BJ (cell line): ENCODE measurements at regions of chr19 and their contacts with region 1.

Region 1: DNA sequence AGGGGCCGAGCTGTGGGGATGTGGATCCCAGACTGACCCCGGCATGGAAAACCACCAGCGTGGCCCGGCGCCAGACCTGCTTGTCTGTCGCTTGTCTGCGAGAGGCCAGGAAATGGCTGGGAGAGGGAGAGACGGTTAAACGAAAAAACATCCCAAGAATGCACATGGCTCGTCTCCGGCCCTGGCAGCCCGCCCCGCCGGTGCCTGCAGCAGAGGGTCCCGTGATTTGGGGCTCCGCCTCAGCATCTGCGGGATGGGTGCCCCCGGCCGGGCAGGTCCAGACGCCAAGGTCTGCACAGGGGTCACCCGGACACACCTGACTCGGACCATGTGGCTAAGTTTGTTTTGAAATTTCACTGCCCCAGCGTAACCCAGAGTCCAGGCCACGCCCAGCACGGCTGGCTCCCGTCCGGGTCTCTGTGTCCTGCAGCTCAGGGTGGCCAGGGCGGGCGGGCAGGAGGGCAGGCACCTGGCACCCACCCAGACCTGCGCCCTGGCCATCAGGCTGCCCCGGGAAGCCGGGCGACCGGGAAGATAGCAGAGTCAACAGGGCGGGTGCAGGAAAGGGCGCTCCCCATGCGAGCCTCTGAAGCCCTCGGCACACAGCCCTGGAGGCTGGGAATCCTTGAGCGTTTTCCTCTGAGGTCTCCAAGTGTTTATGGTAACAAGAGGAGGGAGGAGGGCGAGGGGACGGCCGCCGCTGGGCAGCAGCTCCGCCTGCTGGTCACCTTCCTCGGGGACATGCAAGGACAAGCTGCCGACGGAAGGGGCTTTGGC is 103.2 kb downstream of the GADD45B start:
- DNase-seq: peak; percentile 65
- H3K4me3 ChIP-seq: peak overlapping the region; percentile 40
- H3K27me3 ChIP-seq: no peaks in the 10 kb centered on the region
- CTCF ChIP-seq: peak; percentile 98

Region 2: DNA sequence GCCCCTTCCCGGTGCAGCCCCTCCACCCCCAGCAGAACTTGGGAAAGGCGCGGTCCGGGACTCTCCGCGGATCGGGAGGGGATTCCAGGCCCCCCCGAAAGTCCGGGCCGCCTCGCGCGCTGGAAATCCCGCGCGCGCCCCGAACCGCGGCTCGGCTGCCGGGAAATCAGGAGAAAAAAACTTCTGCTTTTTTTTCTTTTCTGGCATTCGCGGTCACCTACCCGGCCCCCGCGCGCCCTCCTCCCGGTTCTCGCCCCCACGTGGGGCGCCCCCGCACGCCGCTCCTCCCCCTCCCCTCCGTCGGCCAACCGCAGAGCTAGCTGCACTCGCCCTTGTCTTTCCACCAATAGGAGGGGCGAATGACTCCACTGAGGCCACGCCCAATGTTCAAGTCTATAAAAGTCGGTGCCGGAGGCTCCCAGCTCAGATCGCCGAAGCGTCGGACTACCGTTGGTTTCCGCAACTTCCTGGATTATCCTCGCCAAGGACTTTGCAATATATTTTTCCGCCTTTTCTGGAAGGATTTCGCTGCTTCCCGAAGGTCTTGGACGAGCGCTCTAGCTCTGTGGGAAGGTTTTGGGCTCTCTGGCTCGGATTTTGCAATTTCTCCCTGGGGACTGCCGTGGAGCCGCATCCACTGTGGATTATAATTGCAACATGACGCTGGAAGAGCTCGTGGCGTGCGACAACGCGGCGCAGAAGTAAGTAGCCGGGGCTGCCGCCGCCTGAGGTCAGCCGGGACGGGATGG is 103.2 kb before region 1 on chr19 and contains the start of gene GADD45B:
- CTCF ChIA-PET with region 1: interaction called, 65 read pairs
- POLR2A ChIA-PET with region 1: interaction called, 41 read pairs
- DNase-seq: peak; percentile 85
- H3K4me3 ChIP-seq: peak within 1 kb of the TSS; percentile 70
- H3K27me3 ChIP-seq: no peaks in the 10 kb centered on the region
- CTCF ChIP-seq: no peak
- polyA plus RNA-seq, gene GADD45B: 54.5 and 69.8 TPM in 2 replicates

Region 3: GRCh38 chr19:2543463-2544442 is 35.3 kb before region 1 on chr19:
- CTCF ChIA-PET with region 1: interaction called, 22 read pairs
- POLR2A ChIA-PET with region 1: no interaction called
- DNase-seq: peak; percentile 91
- H3K4me3 ChIP-seq: no peak overlapping the region
- H3K27me3 ChIP-seq: no peaks in the 10 kb centered on the region
- CTCF ChIP-seq: peak; percentile 52

Region 4: DNA sequence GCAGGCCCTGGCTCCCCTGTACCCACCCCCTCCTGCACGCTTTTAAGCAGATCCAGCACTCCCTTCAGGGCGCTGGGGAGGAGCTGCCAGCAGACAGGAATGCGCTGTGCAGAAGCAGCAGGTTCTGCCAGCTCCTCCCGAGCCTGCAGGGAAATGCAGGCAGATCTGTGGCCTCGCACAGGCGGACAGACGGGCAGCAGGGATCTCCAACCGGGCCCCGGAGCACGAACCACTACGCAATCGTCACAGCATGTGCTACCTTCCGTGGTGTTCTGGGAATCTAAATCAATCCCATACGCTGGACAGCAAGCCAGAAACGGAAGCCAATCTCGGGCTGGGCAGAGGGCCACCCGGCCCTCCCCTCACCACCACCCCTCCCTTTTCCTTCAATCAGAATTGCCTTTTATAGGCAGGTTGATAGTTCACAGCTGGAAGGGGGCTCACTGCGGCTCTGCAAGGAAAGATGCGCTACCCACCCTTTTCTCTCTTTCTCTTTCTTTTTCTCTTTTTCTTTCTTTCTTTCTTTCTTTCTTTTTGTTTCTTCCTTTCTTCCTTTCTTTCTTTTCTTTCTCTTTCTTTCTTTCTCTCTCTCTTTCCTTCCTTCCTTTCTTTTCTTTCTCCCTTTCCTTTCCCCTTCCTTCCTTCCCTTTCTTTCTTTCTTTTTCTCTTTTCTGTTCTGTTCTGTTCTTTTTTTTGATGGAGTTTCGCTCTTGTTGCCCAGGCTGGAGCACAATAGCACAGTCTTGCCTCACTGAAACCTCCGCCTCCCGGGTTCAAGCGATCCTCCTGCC is 23.5 kb after region 1 on chr19:
- CTCF ChIA-PET with region 1: interaction called, 32 read pairs
- POLR2A ChIA-PET with region 1: no interaction called
- DNase-seq: peak; percentile 97
- H3K4me3 ChIP-seq: peak overlapping the region; percentile 27
- H3K27me3 ChIP-seq: no peaks in the 10 kb centered on the region
- CTCF ChIP-seq: peak; percentile 27; the same call in 1 of the 2 replicates

Region 5: DNA sequence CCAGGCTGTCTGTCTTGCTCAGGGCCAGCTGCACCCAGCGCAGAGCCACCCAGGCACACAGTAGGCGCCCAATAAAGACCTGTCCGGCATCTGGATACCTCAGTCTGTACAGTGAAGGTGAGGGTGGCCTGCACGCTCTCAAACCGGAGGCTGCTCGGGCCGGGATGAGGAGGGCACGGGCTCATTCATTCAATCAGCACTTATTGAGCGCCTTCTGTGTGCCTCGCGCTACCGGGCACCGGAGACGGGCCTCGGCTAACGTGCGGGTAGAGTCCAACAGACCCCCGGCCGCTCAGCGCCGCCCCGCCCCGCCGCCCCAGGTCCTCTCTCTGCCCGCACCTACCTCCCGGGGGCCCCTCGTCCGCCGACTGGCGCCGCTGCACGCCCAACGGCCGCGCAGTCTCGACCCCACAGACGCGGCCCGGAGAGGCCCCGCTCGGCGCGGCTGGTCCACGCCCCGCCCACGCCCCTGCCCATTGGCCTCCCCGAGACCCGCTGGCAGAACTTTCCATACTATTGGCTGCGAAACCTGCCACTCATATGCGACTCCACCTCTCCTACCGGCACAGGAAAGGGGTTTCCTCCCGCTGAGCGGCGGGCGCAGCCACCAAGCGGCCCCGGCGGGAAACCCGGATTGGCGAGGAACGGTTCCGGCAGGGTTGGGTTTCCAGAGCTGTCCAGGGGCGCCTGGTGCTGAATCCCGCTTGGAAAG is 160.7 kb after region 1 on chr19 and contains the start of gene SLC39A3:
- CTCF ChIA-PET with region 1: no interaction called
- POLR2A ChIA-PET with region 1: no interaction called
- DNase-seq: peak; percentile 76
- H3K4me3 ChIP-seq: peak within 1 kb of the TSS; percentile 88
- H3K27me3 ChIP-seq: no peaks in the 10 kb centered on the region
- CTCF ChIP-seq: peak; percentile 34
- polyA plus RNA-seq, gene SLC39A3: 51.7 and 67.9 TPM in 2 replicates